Calu3 (cell line): ENCODE measurements at regions of chr1 and their contacts with region 1.

Region 1: GRCh38 chr1:221741711-221742554 is at the start of gene DUSP10:
- DNase-seq: peak; percentile 99
- H3K4me3 Mint-ChIP-seq: no peak within 1 kb of the TSS
- H3K27ac Mint-ChIP-seq: no peak within 1 kb of the TSS
- H3K4me1 Mint-ChIP-seq: peaks cover 41% of the 10 kb centered on the region
- H3K27me3 Mint-ChIP-seq: no peaks in the 10 kb centered on the region
- CTCF ChIP-seq: no peak
- total RNA-seq, gene DUSP10: 55.1 and 58.2 TPM in 2 replicates

Region 2: GRCh38 chr1:221543529-221544120 is 198.3 kb before region 1 on chr1:
- CTCF ChIA-PET with region 1: interaction called, 21 read pairs
- intact Hi-C with region 1: loop called (anchors 2 kb)
- DNase-seq: no peak
- H3K4me3 Mint-ChIP-seq: no peak overlapping the region
- H3K27ac Mint-ChIP-seq: no peak overlapping the region
- H3K4me1 Mint-ChIP-seq: peaks cover 14% of the 10 kb centered on the region
- H3K27me3 Mint-ChIP-seq: no peaks in the 10 kb centered on the region
- CTCF ChIP-seq: peak; percentile 40

Region 3: GRCh38 chr1:221667504-221667903 is 74.4 kb before region 1 on chr1:
- CTCF ChIA-PET with region 1: no interaction called
- intact Hi-C with region 1: no loop called
- DNase-seq: peak; percentile 22
- H3K4me3 Mint-ChIP-seq: peak overlapping the region; percentile 5
- H3K27ac Mint-ChIP-seq: peak overlapping the region; percentile 80
- H3K4me1 Mint-ChIP-seq: peaks cover 62% of the 10 kb centered on the region
- H3K27me3 Mint-ChIP-seq: no peaks in the 10 kb centered on the region
- CTCF ChIP-seq: no peak

Region 4: GRCh38 chr1:221773383-221773782 is 31.4 kb after region 1 on chr1:
- CTCF ChIA-PET with region 1: no interaction called
- intact Hi-C with region 1: no loop called
- DNase-seq: no peak
- H3K4me3 Mint-ChIP-seq: no peak overlapping the region
- H3K27ac Mint-ChIP-seq: no peak overlapping the region
- H3K4me1 Mint-ChIP-seq: no peaks in the 10 kb centered on the region
- H3K27me3 Mint-ChIP-seq: no peaks in the 10 kb centered on the region
- CTCF ChIP-seq: no peak

Region 5: GRCh38 chr1:221845650-221846371 is 103.9 kb after region 1 on chr1:
- CTCF ChIA-PET with region 1: interaction called, 4 read pairs
- intact Hi-C with region 1: loop called (anchors 1 kb)
- DNase-seq: peak; percentile 70
- H3K4me3 Mint-ChIP-seq: no peak overlapping the region
- H3K27ac Mint-ChIP-seq: peak overlapping the region; percentile 51
- H3K4me1 Mint-ChIP-seq: peaks cover 54% of the 10 kb centered on the region
- H3K27me3 Mint-ChIP-seq: no peaks in the 10 kb centered on the region
- CTCF ChIP-seq: no peak

Region 6: DNA sequence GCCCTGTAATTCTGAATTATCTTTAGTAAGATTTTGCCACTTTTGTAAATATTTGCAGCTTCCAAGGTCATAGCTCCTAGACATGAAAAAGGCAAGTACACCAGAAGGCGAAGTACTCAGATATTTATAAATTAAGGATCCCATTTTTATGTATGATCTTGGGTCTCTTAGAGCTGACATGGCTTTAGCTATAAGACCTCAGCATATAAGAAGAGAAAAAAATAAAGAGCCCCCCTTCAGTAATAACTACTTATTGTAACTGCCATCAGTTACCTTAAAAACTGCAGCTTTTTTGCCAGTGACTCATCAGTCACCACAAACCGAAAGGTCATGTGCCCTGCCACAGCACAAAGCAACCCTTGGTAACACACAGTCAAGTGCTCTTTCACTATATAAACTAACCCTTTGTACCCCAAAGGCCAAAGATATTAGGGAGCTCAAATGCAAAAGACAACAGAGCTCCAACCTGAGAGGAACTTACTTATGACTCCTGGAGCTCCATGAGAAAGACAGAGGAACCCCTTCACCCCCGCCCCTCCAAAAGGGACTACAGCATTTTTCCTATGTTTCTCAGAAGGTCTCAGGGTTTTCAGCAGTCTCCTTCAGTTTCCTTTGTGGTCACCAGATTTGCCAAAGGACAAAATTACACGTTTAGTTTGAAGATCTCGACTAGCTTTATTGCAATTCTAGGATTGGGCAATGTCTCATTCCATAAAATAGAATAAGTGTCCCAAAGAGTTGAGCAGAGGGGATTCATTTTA is 219.8 kb after region 1 on chr1:
- CTCF ChIA-PET with region 1: interaction called, 19 read pairs
- intact Hi-C with region 1: loop called (anchors 2 kb)
- DNase-seq: peak; percentile 74
- H3K4me3 Mint-ChIP-seq: peak overlapping the region; percentile 51
- H3K27ac Mint-ChIP-seq: peak overlapping the region; percentile 94
- H3K4me1 Mint-ChIP-seq: peaks cover 68% of the 10 kb centered on the region
- H3K27me3 Mint-ChIP-seq: no peaks in the 10 kb centered on the region
- CTCF ChIP-seq: no peak

Region 7: DNA sequence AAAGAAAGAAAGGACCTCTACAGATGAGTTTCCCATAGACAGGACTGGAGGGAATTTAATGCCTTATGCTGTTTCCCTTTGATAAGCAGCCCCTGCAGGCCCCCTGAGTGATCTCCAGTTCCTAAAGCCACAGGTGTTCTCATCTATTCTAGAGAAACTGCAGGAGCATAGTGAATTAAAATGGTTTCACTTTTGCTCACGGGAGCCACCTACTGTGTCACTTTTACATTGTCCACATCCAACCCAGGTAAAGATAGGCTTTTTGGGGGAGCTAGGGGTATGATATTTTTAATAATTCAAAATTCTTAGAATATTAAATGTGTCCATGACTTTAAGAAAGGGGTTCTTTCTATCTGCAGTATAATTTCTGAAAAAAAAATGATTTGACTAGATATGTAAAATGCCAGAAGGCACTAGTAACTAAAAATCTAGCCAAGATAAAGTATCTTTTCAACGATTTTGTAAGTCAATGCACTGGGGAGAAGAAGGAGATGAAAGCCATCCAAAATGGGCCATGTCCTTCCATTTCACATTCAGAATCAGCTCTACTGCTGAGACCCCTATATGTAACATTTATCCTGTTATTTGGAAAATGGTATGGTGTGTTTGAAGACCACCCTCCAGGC is 267.3 kb after region 1 on chr1:
- CTCF ChIA-PET with region 1: interaction called, 12 read pairs
- intact Hi-C with region 1: no loop called
- DNase-seq: peak; percentile 41
- H3K4me3 Mint-ChIP-seq: no peak overlapping the region
- H3K27ac Mint-ChIP-seq: no peak overlapping the region
- H3K4me1 Mint-ChIP-seq: peaks cover 10% of the 10 kb centered on the region
- H3K27me3 Mint-ChIP-seq: no peaks in the 10 kb centered on the region
- CTCF ChIP-seq: peak; percentile 44